ENCODE measurements at regions of chr6 and their contacts with region 1.

Region 1: DNA sequence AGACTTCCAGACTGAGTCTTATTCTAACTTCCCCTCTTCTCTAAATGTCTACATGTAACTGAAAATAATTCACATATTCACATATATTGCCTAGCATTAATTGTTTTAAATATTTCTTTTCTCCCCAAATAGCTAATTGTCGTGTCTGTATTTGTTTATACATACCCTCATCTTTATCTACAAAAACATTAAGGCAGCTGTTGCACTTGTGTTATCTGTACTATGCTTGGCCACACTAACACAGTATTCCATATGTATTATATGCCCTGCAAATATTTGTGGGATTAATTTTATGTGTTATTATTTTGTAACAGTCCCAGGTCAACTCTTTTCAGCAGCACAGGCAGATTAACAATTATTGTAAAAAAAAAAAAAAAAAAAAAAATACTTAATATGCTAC is 11.7 kb downstream of the HDAC2 start:
- DNase-seq: no peak
- ATAC-seq: peak; percentile 66
- H3K4me3 ChIP-seq: no peak overlapping the region
- H3K27ac ChIP-seq: no peak overlapping the region
- H3K4me1 ChIP-seq: no peaks in the 10 kb centered on the region; a peak in 1 of 5 replicates
- H3K27me3 ChIP-seq: no peaks in the 10 kb centered on the region
- CTCF ChIP-seq: no peak
- EP300 ChIP-seq: no peak
- POLR2A ChIP-seq: no peak
- RAD21 ChIP-seq: no peak

Region 2: GRCh38 chr6:113969888-113970804 is 10.9 kb after region 1 on chr6:
- CTCF ChIA-PET with region 1: no interaction called
- POLR2A ChIA-PET with region 1: interaction called, 14 read pairs
- in situ Hi-C with region 1: no loop called
- intact Hi-C with region 1: no loop called
- DNase-seq: peak; percentile 57 to 71 (median 64)
- ATAC-seq: peak; percentile 79
- H3K4me3 ChIP-seq: peak overlapping the region; percentile 78
- H3K27ac ChIP-seq: peak overlapping the region; percentile 92
- H3K4me1 ChIP-seq: peaks cover 5 to 10% of the 10 kb centered on the region in 2 experiments; a peak in 4 of 5 replicates
- H3K27me3 ChIP-seq: no peaks in the 10 kb centered on the region
- CTCF ChIP-seq: no peak
- EP300 ChIP-seq: no peak
- POLR2A ChIP-seq: no peak
- RAD21 ChIP-seq: no peak

Region 3: GRCh38 chr6:114281496-114281895 is 322.3 kb after region 1 on chr6:
- CTCF ChIA-PET with region 1: no interaction called
- POLR2A ChIA-PET with region 1: no interaction called
- in situ Hi-C with region 1: no loop called
- intact Hi-C with region 1: no loop called
- DNase-seq: no peak
- ATAC-seq: no peak
- H3K4me3 ChIP-seq: no peak overlapping the region
- H3K27ac ChIP-seq: no peak overlapping the region
- H3K4me1 ChIP-seq: no peaks in the 10 kb centered on the region
- H3K27me3 ChIP-seq: no peaks in the 10 kb centered on the region
- CTCF ChIP-seq: no peak
- EP300 ChIP-seq: no peak
- POLR2A ChIP-seq: no peak
- RAD21 ChIP-seq: no peak